CD4-positive, alpha-beta T cell (primary cell): ENCODE measurements at regions of chr12 and their contacts with region 1.

Region 1: DNA sequence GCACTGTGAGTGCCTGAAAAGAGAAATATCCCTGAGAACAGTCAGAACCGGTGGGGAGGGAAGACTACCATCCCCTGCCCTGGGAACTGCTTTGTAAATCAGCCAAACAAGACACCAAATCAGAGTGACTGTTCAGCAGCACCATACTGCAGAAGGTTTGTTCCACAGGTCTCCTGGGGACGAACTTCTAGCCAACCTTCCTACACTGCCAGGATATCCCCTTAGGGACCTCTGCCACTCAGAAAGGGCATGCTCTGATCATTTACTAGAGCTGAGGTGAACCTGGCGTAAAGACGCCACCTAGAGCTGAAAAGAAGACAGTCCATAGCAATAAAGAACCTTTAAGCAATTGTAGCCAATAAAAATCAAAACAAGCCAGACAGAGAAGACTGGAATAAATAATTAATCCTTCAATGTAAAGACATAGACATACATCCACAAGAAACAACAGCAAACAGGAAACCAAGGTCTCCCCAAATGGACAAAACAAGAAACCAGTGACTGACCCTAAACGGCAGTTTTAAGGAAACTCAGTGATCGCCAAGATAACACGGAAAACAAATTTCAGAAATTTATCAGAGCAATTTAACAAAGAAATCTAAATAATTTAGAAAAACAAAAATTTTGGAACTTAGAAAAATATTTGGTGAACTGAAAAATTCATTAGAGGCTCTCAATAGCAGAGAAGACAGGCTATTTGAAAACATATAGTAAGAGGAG is 228.1 kb upstream of the AMIGO2 start:
- DNase-seq: peak in 13 of 14 experiments; percentile 27 to 83 (median 48)
- ATAC-seq: peak; percentile 93
- H3K4me3 ChIP-seq: peak overlapping the region; percentile 62
- H3K4me3 Mint-ChIP-seq: peak overlapping the region; percentile 93
- H3K27ac ChIP-seq: peak overlapping the region; percentile 33 to 38
- H3K27ac Mint-ChIP-seq: peak overlapping the region; percentile 93
- H3K4me1 ChIP-seq: peaks cover 12% of the 10 kb centered on the region
- H3K4me1 Mint-ChIP-seq: peaks cover 29% of the 10 kb centered on the region
- H3K27me3 ChIP-seq: no peaks in the 10 kb centered on the region
- H3K27me3 Mint-ChIP-seq: no peaks in the 10 kb centered on the region
- CTCF ChIP-seq: peak; percentile 75

Region 2: GRCh38 chr12:46071769-46072624 is 1235.8 kb before region 1 on chr12:
- CTCF ChIA-PET with region 1: no interaction called
- POLR2A ChIA-PET with region 1: no interaction called
- intact Hi-C with region 1: loop called in 1 of 2 experiments (anchors 5 kb)
- DNase-seq: peak; percentile 32 to 77 (median 52)
- ATAC-seq: peak; percentile 96
- H3K4me3 ChIP-seq: no peak overlapping the region
- H3K4me3 Mint-ChIP-seq: no peak overlapping the region
- H3K27ac ChIP-seq: no peak overlapping the region
- H3K27ac Mint-ChIP-seq: no peak overlapping the region
- H3K4me1 ChIP-seq: no peaks in the 10 kb centered on the region
- H3K4me1 Mint-ChIP-seq: peaks cover 4% of the 10 kb centered on the region
- H3K27me3 ChIP-seq: no peaks in the 10 kb centered on the region
- H3K27me3 Mint-ChIP-seq: peaks cover 4% of the 10 kb centered on the region
- CTCF ChIP-seq: peak; percentile 88

Region 3: DNA sequence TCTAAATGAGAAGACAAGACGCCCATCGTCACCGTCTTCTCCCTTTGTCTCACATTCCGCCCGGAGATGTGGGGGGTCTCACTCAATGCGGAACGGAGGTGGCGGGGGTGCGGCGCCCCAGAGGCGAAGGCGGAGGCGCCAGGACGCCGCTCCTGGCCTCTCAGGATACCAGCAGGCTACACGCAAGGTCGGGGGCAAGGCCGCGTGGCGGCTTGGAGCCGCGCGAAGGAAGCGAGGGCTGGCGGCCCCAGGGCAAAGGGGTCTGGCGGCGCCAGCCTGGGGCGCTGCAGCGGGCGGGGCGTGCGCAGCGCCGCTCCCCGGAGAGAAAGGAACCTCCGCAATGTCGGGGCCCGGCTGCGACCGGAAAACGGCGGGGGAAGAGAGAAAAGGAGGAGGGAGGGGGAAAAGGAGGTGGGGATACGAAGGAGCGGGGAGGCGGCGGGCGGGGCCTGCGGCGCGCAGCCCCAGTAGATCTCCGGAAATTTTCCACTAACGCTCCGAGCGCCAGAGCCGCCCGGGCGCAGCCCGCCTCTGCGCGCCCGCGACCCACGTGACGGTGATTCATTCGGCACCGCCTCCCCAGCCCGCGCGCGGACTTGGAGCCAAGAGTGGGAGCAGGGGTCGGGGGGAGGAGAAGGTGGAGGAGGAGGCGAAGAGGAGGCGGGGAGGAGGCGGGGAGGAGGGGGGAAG is 924.7 kb before region 1 on chr12:
- CTCF ChIA-PET with region 1: no interaction called
- POLR2A ChIA-PET with region 1: no interaction called
- intact Hi-C with region 1: no loop called
- DNase-seq: peak; percentile 74 to 97 (median 88)
- ATAC-seq: peak; percentile 73
- H3K4me3 ChIP-seq: peak overlapping the region; percentile 83
- H3K4me3 Mint-ChIP-seq: peak overlapping the region; percentile 93
- H3K27ac ChIP-seq: peak overlapping the region; percentile 83 to 90
- H3K27ac Mint-ChIP-seq: peak overlapping the region; percentile 99
- H3K4me1 ChIP-seq: peaks cover 16% of the 10 kb centered on the region
- H3K4me1 Mint-ChIP-seq: peaks cover 44% of the 10 kb centered on the region
- H3K27me3 ChIP-seq: no peaks in the 10 kb centered on the region
- H3K27me3 Mint-ChIP-seq: no peaks in the 10 kb centered on the region
- CTCF ChIP-seq: peak; percentile 4

Region 4: DNA sequence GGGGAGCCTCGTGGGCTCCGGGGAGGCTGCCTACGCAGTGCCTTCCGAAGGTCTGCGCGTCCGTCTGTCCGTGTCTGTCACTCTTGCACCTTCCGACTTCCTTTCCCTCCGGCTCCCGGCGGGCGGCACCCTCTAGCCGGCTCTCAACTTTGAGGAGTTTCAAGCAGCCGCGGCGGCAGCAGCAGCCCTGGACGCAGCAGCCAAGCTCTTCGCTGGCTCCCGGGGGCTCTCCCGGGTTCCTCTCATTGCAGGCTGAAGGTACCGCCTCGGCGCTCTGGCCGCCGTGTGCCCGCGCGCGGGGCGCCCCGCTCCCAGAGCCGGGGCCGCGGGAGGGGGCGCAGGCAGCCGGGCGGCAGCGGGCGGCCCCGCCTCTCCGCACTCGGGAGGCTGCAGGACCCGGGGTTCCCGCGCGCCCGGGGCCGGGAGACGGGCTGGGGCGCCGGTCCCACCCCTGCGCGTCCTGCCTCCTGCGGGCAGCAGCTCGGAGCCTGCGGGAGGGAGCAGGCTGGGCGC is 228.3 kb before region 1 on chr12 and contains the starts of genes AMIGO2 and PCED1B:
- CTCF ChIA-PET with region 1: no interaction called
- POLR2A ChIA-PET with region 1: interaction called, 25 read pairs
- intact Hi-C with region 1: loop called (anchors 2 to 5 kb)
- DNase-seq: peak; percentile 30 to 79 (median 62)
- ATAC-seq: peak; percentile 52
- H3K4me3 ChIP-seq: peak within 1 kb of the TSS; percentile 84
- H3K4me3 Mint-ChIP-seq: peak within 1 kb of the TSS; percentile 95
- H3K27ac ChIP-seq: peak within 1 kb of the TSS; percentile 50 to 80
- H3K27ac Mint-ChIP-seq: peak within 1 kb of the TSS; percentile 98
- H3K4me1 ChIP-seq: peaks cover 34% of the 10 kb centered on the region
- H3K4me1 Mint-ChIP-seq: peaks cover 86% of the 10 kb centered on the region
- H3K27me3 ChIP-seq: no peaks in the 10 kb centered on the region
- H3K27me3 Mint-ChIP-seq: no peaks in the 10 kb centered on the region
- CTCF ChIP-seq: peak; percentile 37
- total RNA-seq, gene AMIGO2: 9.7 to 10.1 TPM
- total RNA-seq, gene PCED1B: 18.7 to 20.0 TPM

Region 5: DNA sequence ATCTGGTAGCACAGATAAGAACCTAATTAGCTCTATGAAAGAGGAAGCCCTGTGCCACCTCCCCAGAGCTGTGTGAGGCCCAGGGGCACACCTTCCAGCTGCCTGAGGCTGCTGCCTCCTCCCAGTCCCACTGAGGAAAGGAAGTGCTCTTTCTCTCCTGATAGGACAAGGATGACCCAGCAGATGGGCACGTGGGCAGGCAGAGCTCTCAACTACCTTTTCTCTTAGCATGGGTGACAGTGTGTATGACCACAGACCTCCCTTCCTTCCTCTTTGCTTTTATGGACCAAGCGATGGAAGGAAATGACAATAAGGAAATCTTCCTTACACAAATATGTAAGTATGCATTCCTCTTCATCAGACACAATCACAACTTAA is 100.5 kb before region 1 on chr12:
- CTCF ChIA-PET with region 1: no interaction called
- POLR2A ChIA-PET with region 1: interaction called, 29 read pairs
- intact Hi-C with region 1: no loop called
- DNase-seq: peak in 8 of 14 experiments; percentile 18 to 77 (median 44)
- ATAC-seq: peak; percentile 56
- H3K4me3 ChIP-seq: peak overlapping the region; percentile 32
- H3K4me3 Mint-ChIP-seq: peak overlapping the region; percentile 67
- H3K27ac ChIP-seq: peak overlapping the region; percentile 65 to 71
- H3K27ac Mint-ChIP-seq: peak overlapping the region; percentile 88
- H3K4me1 ChIP-seq: peaks cover 71% of the 10 kb centered on the region
- H3K4me1 Mint-ChIP-seq: peaks cover 88% of the 10 kb centered on the region
- H3K27me3 ChIP-seq: no peaks in the 10 kb centered on the region
- H3K27me3 Mint-ChIP-seq: no peaks in the 10 kb centered on the region
- CTCF ChIP-seq: no peak

Region 6: GRCh38 chr12:47223848-47224213 is 84.0 kb before region 1 on chr12:
- CTCF ChIA-PET with region 1: interaction called, 4 read pairs
- POLR2A ChIA-PET with region 1: interaction called, 16 read pairs
- intact Hi-C with region 1: loop called (anchors 5 kb)
- DNase-seq: no peak
- ATAC-seq: no peak
- H3K4me3 ChIP-seq: peak overlapping the region; percentile 28
- H3K4me3 Mint-ChIP-seq: peak overlapping the region; percentile 55
- H3K27ac ChIP-seq: peak overlapping the region; percentile 36 to 44
- H3K27ac Mint-ChIP-seq: peak overlapping the region; percentile 82
- H3K4me1 ChIP-seq: peaks cover 70% of the 10 kb centered on the region
- H3K4me1 Mint-ChIP-seq: peaks cover 74% of the 10 kb centered on the region
- H3K27me3 ChIP-seq: no peaks in the 10 kb centered on the region
- H3K27me3 Mint-ChIP-seq: no peaks in the 10 kb centered on the region
- CTCF ChIP-seq: no peak

Region 7: DNA sequence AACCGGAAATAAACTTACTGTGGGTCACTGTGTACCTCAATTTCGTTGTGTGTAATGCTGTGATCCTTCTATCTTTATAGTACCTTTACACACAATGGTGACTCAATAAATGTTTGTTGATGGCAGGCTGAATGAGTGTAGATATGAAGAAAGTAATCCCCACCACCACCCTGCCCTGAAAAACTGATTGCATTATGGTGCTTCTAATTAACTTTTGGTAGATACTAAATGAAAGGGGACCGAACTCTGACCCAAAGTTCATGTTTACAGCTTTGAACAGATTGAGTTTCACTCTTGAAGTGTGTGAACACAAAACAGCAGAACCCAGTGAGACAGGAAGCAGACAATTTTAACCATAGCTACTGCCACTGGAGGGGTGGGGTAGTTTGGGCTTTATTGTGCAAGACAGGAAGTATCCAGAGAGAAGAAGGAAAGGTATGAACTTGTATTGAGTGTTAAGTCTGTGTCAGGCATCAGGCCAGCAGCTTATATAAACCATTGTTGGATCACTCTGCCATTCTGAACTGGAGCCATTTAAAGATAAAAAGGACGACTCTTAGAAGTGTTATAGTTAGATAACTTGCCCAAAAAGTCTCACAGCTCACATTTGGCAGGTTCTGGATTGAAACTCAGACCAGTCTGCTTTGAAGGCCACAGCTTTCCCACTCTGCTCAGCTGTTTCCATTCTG is 31.1 kb before region 1 on chr12:
- CTCF ChIA-PET with region 1: interaction called, 3 read pairs
- POLR2A ChIA-PET with region 1: interaction called, 38 read pairs
- intact Hi-C with region 1: loop called in 1 of 2 experiments (anchors 2 kb)
- DNase-seq: peak; percentile 26 to 94 (median 50)
- ATAC-seq: peak; percentile 96
- H3K4me3 ChIP-seq: no peak overlapping the region
- H3K4me3 Mint-ChIP-seq: peak overlapping the region; percentile 61
- H3K27ac ChIP-seq: peak overlapping the region; percentile 72 to 81
- H3K27ac Mint-ChIP-seq: peak overlapping the region; percentile 90
- H3K4me1 ChIP-seq: peaks cover 40% of the 10 kb centered on the region
- H3K4me1 Mint-ChIP-seq: peaks cover 83% of the 10 kb centered on the region
- H3K27me3 ChIP-seq: no peaks in the 10 kb centered on the region
- H3K27me3 Mint-ChIP-seq: no peaks in the 10 kb centered on the region
- CTCF ChIP-seq: no peak

Region 8: GRCh38 chr12:47397664-47398281 is 89.9 kb after region 1 on chr12:
- CTCF ChIA-PET with region 1: interaction called, 4 read pairs
- POLR2A ChIA-PET with region 1: interaction called, 11 read pairs
- intact Hi-C with region 1: loop called (anchors 2 to 5 kb)
- DNase-seq: peak in 11 of 14 experiments; percentile 5 to 80 (median 33)
- ATAC-seq: peak; percentile 91
- H3K4me3 ChIP-seq: no peak overlapping the region
- H3K4me3 Mint-ChIP-seq: peak overlapping the region; percentile 49
- H3K27ac ChIP-seq: peak overlapping the region in 1 of 2 donors; percentile 23
- H3K27ac Mint-ChIP-seq: peak overlapping the region; percentile 63
- H3K4me1 ChIP-seq: peaks cover 40% of the 10 kb centered on the region
- H3K4me1 Mint-ChIP-seq: peaks cover 53% of the 10 kb centered on the region
- H3K27me3 ChIP-seq: no peaks in the 10 kb centered on the region
- H3K27me3 Mint-ChIP-seq: no peaks in the 10 kb centered on the region
- CTCF ChIP-seq: peak; percentile 66